ENCODE measurements at regions of chr16 and their contacts with region 1.

Region 1: GRCh38 chr16:3059000-3059722 is 6.3 kb upstream of the IL32 start:
- DNase-seq: peak; percentile 89
- H3K4me3 Mint-ChIP-seq: peak overlapping the region; percentile 96
- H3K27ac Mint-ChIP-seq: peak overlapping the region; percentile 92
- H3K4me1 Mint-ChIP-seq: peaks cover 79% of the 10 kb centered on the region
- H3K27me3 Mint-ChIP-seq: no peaks in the 10 kb centered on the region

Region 2: DNA sequence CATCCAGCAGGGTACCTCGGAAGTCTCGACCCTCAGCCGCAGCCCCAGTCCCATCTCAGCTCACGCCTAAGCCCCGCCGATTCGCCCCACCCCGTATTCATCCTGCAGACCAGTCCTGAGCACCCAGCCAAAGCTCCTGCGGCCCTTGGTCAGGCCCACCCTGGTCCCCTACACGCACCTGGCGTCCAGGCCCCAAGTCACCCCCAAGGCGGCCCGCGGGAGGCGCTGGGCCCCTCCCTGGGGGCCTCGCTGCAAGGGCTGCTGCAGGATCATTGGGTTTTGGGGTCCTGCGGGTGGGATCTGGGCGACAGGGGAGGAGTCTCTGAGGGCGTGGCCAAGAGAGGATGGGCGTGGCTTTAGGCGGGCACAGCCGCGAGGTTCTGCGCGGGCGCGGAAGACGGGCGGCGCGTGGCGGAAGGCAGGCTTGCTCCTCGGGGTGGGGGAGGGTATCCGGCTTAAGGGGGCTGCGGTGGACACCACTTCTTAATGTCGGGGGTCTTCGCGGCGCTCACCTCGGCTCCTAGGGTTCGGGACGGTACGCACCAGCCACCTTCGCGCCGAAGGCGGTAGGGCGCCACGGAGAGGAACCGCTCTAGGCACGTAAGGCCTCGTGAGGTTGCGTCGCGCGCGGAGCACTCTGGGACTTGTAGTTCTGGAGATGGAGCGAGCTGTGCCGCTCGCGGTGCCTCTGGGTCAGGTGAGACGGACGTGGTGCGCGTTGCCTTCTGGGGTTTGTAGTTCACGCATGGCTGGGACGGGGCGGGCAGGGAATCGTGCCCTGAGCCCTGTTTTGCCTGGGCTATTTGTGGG is 35.3 kb before region 1 on chr16 and contains the starts of genes HCFC1R1 and THOC6:
- CTCF ChIA-PET with region 1: interaction called, 71 read pairs
- DNase-seq: peak; percentile 98
- H3K4me3 Mint-ChIP-seq: peak within 1 kb of the TSS; percentile 90
- H3K27ac Mint-ChIP-seq: peak within 1 kb of the TSS; percentile 95
- H3K4me1 Mint-ChIP-seq: peaks cover 71% of the 10 kb centered on the region
- H3K27me3 Mint-ChIP-seq: peaks cover 35% of the 10 kb centered on the region

Region 3: DNA sequence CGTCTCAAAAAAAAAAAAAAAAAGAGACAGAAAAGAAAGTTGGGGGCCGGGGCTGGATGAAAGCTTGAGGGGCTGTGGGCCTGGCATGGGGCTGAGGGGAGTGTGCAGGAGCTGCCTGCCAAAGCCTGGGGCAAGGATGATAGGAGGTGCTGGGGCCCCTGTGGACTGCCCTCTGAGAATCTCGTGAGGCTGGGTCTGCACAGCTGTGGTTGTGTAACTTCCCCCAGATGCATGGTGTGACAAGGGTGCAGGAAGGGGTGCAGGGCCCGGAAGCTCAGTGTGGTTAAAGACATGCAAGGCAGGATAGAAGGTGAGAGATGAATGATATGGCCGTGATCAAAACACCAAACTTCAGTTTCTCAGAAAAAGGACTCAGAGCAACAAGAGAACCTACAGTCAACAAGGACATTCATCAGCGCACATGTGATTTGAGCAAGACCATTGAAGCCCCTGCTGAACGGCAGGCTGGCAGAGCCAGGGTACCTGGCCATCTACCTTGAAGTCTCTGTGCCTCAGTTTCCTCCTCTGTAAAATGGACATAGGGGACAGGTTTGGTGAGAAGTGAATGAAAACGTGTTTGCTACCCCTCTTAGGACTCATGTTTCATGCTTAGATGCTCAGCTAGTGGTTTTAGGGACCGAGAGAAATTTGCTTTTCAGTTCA is 15.8 kb after region 1 on chr16:
- CTCF ChIA-PET with region 1: interaction called, 29 read pairs
- DNase-seq: peak; percentile 95
- H3K4me3 Mint-ChIP-seq: peak overlapping the region; percentile 74
- H3K27ac Mint-ChIP-seq: peak overlapping the region; percentile 100
- H3K4me1 Mint-ChIP-seq: peaks cover 94% of the 10 kb centered on the region
- H3K27me3 Mint-ChIP-seq: no peaks in the 10 kb centered on the region

Region 4: DNA sequence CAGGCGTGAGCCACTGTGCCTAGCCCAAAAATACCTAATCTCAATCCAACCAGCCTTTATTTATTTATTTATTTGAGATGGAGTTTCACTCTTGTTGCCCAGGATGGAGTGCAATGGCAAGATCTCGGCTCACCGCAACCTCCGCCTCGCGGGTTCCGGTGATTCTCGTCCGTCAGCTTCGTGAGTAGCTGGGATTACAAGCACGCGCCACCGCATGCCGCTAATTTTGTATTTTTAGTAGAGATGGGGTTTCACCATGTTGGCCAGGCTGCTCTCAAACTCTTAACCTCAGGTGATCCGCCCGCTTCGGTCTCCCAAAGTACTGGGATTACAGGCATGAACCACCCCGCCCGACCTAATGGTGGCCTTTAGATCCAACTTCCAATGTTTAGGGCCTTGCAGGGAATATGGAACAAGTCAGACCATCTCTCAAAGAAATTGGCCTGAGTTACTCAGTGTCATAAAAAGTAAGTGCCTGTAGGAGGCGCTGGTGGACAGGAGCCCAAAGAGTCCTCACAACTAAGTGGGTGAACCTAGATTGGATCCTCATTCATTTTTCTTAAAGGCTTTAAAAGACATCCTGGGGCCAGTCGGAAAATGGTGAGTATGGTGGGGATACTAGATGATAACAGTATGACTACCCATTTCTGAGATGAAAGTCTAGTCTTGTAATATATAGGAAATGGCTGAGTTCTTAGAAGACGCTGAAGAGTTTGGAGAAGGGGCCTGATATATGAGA is 35.3 kb after region 1 on chr16:
- CTCF ChIA-PET with region 1: interaction called, 24 read pairs
- DNase-seq: peak; percentile 70
- H3K4me3 Mint-ChIP-seq: no peak overlapping the region
- H3K27ac Mint-ChIP-seq: peak overlapping the region; percentile 1
- H3K4me1 Mint-ChIP-seq: peaks cover 67% of the 10 kb centered on the region
- H3K27me3 Mint-ChIP-seq: peaks cover 13% of the 10 kb centered on the region

Region 5: DNA sequence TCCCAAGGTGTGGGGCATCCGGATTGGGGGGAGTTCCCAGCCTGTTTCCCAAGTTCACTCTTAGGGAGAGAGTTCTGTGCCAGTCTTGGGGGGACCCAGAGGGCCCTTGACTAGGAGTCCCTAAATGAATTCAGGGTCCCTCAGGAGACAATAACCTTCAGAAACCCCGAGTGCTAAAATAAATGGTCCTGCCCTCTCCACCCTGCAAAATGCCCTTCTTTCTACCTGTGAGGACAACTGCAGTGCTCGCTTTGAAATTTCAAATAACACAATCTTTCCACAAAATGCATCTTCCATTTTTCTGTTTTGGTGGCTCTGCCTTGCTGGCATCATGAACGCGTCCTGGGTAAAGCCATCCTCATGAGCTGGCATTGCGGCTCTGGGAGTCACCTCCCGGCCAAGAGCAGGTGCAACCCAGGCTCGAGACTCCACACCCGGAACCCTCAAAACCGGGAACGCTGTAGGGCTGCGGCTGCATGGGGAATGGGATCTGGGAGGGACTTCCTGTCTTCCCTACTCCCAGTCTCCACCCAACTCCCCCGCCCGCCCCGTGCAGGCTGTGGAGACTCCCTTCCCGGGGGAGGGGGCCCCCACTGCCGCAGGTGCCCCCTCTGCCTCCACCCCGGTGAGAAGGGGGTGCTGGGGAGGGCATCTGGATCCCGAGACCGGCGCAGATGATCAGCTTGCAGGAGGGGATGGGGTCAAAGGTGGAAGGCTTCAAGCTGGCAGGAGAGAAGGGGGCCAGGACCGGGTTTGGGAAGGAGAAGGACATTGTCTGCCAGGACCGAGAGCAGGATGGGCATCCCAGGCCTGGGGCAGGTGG is 53.1 kb after region 1 on chr16 and contains the start of gene ZNF205:
- CTCF ChIA-PET with region 1: interaction called, 11 read pairs
- DNase-seq: no peak
- H3K4me3 Mint-ChIP-seq: no peak within 1 kb of the TSS
- H3K27ac Mint-ChIP-seq: no peak within 1 kb of the TSS
- H3K4me1 Mint-ChIP-seq: peaks cover 8% of the 10 kb centered on the region
- H3K27me3 Mint-ChIP-seq: peaks cover 75% of the 10 kb centered on the region